Activated T-helper 2 cell treated with anti-CD3 and anti-CD28 coated beads, Interferon-gamma antibody, Interleukin-2, Interleukin-4, amounts not matched to agents 10 μg/mL and 5 μg/mL and 100 μg/mL, durations not matched to agents 14 hours and 24 hours and 36 hours (primary cell): ENCODE measurements at regions of chr1 and their contacts with region 1.

Region 1: DNA sequence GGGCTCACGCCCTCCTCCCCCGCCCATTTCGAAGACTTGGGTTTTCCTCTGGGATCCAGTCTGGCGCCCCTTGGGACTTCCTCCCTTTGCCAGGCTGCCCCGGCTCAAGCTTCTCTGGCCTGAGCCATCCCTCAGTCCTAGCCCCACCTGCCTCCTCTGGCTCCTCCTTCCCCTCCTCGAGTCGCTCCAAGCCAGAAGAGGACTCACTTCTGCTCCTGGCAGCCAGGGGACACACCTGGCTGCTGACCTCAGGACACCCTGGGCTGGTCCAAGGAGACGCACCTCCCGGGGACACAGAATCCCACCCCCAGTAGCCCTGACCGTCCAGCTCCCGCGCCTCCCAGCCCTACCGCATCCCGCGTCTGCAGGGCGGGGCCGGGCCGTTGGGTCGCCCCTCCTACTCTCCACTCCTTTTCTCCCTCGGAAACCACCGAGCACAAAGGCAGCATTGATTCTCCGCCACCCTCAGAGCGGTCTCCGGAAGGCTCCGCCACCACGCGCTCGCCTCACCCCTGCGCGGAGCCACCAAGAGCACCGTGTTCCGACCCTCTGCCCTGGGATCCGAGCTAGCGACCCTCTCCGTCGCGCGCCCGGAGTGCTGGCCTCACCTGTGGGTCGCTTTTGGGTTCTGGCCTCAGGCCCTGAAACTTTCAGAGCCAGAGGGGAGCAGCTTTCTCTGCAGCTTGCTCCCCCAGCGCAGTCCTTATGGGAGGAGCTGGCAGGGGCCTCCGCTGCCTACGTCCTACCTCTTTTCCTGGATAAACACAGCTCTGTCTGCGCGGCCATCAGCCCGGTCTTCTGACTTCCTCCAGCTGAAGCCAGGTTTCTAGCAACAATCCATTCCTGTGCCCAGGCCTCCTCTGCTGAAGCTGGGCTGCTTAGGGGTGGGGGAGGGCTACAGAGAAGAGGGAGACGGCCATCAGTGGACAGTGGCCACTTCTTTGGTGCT is at the start of gene C2CD4D:
- DNase-seq: peak; percentile 67
- H3K4me3 Mint-ChIP-seq: peak within 1 kb of the TSS; percentile 78
- H3K27ac Mint-ChIP-seq: peak within 1 kb of the TSS; percentile 80
- H3K4me1 Mint-ChIP-seq: peaks cover 37% of the 10 kb centered on the region
- H3K27me3 Mint-ChIP-seq: no peaks in the 10 kb centered on the region
- total RNA-seq, gene C2CD4D: 1.3 and 1.6 TPM in 2 replicates

Region 2: DNA sequence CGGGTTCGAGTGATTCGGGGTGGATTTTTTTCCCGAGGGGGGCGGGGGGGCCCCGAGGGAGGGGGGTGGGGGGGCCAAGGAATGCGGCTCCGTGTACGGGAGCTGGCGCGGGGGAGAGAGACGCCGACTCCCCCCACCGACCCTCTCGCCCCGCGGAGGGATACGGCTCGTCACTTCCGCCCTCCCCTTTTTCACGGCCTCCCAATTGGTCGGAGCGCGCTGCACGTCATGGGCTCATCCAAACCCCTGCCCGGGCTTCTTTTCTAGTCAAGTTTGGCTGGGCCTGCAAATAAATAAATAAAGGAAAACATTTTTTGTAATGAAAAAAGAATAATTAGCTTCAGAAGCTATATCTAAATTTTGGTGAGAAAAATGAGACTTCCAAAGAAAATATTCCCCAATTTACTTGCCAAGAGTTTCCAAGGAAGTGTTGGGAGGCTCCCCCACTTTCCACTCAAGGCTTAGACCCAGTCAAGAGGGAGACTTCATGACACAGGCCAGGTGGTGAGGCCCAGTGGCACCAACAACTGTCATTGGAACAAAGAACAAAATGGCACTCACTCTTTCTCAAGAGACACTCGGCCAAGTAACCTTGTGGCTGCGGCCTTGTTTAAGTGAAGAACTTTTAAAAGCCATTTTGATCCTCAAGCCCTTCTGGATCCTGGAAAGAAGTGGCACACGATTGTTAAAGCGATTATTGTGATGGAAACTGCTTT is 380.2 kb before region 1 on chr1 and contains the start of gene POGZ:
- intact Hi-C with region 1: loop called (anchors 10 kb)
- DNase-seq: peak; percentile 89
- H3K4me3 Mint-ChIP-seq: peak within 1 kb of the TSS; percentile 93
- H3K27ac Mint-ChIP-seq: peak within 1 kb of the TSS; percentile 94
- H3K4me1 Mint-ChIP-seq: peaks cover 17% of the 10 kb centered on the region
- H3K27me3 Mint-ChIP-seq: peaks cover 11% of the 10 kb centered on the region
- total RNA-seq, gene POGZ: 89.1 and 93.7 TPM in 2 replicates

Region 3: DNA sequence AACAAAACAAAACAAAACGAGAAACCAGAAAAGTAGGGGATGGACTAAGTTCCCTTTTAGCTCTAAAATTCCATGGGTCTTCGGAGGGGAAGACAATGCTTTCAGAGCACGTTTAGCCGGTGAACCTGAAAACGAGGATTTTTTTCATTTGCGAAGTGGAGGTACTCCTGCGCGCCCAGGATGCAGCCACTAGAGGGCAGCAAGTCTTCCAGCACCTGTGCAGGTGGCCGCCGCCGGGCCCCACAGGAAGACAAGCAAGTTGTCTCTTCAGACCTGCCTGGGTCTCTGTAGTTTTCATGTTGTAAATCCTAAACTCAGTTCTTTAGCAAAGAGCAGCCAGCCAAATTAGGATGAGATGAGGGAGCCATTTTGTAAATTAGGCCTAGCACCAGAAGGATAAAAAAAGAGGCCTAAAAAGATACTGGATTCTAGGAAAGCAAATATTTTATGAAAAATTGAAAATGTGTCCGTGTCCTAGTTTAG is 245.5 kb before region 1 on chr1:
- intact Hi-C with region 1: loop called (anchors 1 kb)
- DNase-seq: peak; percentile 71
- H3K4me3 Mint-ChIP-seq: peak overlapping the region; percentile 9
- H3K27ac Mint-ChIP-seq: no peak overlapping the region
- H3K4me1 Mint-ChIP-seq: peaks cover 8% of the 10 kb centered on the region
- H3K27me3 Mint-ChIP-seq: peaks cover 37% of the 10 kb centered on the region

Region 4: GRCh38 chr1:151762941-151763921 is 76.5 kb before region 1 on chr1 and contains the start of gene MRPL9:
- intact Hi-C with region 1: loop called (anchors 2 kb)
- DNase-seq: peak; percentile 83
- H3K4me3 Mint-ChIP-seq: peak within 1 kb of the TSS; percentile 90
- H3K27ac Mint-ChIP-seq: peak within 1 kb of the TSS; percentile 95
- H3K4me1 Mint-ChIP-seq: peaks cover 27% of the 10 kb centered on the region
- H3K27me3 Mint-ChIP-seq: no peaks in the 10 kb centered on the region
- total RNA-seq, gene MRPL9: 141 and 159 TPM in 2 replicates

Region 5: DNA sequence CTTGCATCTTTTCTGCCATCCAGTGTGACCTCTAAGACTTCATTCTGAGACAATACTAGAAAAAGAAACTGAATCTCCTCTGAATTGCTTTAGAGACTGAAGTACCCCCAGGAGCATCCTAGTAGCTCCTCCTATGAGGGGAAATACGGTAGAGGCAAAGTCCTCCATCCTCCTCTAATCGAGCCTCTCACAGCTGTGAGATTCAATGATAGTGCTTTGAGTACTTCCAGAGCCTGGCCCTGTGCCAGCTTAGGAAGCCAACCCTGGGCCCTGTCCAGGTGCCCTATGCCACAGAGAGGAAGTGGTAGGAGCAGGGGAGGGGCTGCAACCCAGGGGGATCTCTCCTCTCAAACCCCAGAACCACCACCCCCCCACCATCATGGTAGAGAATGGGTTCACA is 18.8 kb before region 1 on chr1:
- intact Hi-C with region 1: loop called (anchors 2 kb)
- DNase-seq: no peak
- H3K4me3 Mint-ChIP-seq: no peak overlapping the region
- H3K27ac Mint-ChIP-seq: peak overlapping the region; percentile 8
- H3K4me1 Mint-ChIP-seq: peaks cover 42% of the 10 kb centered on the region
- H3K27me3 Mint-ChIP-seq: no peaks in the 10 kb centered on the region

Region 6: DNA sequence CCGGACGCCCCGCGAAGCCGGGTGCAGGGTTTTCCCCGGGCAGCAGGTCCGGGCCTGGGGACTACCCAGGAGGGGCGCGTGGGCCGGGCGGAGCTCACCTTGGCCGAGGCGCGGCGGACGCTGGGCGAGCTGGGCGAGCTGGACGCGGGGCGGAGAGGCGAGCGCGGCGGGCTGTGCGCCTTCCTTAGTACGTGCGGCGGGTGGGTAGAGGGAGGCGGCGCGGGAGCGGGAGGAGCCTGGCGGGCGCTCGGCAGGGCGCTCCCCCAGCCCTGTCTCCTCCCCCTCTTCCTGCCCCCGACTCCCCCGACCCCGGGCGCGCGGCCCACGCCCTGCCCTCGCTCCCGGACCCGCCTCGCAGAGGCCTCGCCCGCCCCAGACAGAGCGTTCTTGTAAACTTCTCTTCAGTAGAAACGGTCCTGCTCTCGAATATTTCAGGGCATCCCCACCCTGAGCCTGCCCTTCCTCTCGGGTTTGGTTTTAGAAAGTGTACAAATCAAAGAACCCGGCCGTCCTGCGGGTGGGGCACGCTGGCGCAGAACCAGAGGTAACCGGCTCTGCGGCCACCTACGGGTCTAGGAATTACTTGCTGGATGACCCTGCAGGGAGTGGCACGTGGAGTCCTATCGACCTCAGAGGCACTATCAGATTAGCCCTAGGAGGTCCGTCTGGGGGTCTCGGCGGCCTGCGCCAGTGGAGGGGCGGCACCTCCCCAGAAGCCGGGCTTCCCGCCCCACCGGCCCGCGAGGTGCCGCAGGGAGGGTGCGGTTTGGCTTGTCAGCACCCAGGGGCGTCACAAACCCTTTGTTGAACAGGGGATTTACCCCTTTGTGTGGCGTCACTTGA is 154.1 kb after region 1 on chr1 and contains the start of gene S100A10:
- intact Hi-C with region 1: loop called (anchors 5 kb)
- DNase-seq: peak; percentile 80
- H3K4me3 Mint-ChIP-seq: peak within 1 kb of the TSS; percentile 96
- H3K27ac Mint-ChIP-seq: peak within 1 kb of the TSS; percentile 96
- H3K4me1 Mint-ChIP-seq: peaks cover 48% of the 10 kb centered on the region
- H3K27me3 Mint-ChIP-seq: no peaks in the 10 kb centered on the region
- total RNA-seq, gene S100A10: 145 and 160 TPM in 2 replicates